ENCODE measurements at regions of chr12 and their contacts with region 1.

Region 1: DNA sequence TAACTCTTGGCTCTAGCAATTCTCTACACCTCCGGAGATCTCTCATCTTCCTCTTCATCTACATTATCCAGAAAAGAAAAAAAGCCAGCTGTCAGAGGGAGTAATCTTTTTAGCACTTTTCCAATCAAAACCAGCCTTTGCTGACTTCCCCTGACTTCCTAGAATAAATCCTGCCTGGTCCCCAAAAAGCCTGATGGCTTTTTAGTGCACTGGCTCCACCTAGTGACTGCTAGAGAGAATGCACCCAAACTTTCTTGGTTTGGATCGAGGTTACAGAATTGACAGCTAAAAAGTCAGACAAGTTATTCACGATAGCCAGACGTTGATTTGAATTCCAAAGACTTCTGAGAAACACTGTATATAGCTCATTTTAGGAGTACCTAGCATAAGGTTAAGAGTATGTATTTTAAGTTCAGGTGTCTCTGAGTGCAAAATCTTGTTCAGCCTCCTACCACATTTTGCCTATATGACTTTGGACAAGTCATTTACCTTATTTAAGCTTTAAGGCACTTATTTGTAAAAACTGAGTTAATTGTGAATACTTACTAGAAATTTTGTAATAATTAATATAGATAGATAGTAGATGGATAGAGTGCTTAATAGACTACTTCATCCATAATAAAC is 185.7 kb upstream of the GRIN2B start:
- DNase-seq: peak; percentile 7 to 35 (median 24)
- H3K4me3 ChIP-seq: no peak overlapping the region
- H3K4me3 Mint-ChIP-seq: no peak overlapping the region
- H3K27ac ChIP-seq: no peak overlapping the region
- H3K27ac Mint-ChIP-seq: no peak overlapping the region
- H3K4me1 ChIP-seq: no peaks in the 10 kb centered on the region
- H3K4me1 Mint-ChIP-seq: peaks cover 3% of the 10 kb centered on the region
- H3K27me3 ChIP-seq: peaks cover 2 to 3% of the 10 kb centered on the region in 2 donors
- H3K27me3 Mint-ChIP-seq: peaks cover 5 to 8% (median 6%) of the 10 kb centered on the region in 3 donors
- CTCF ChIP-seq: peak; percentile 96

Region 2: GRCh38 chr12:13289653-13290289 is 877.3 kb before region 1 on chr12:
- intact Hi-C with region 1: loop called in 1 of 2 experiments (anchors 10 kb)
- DNase-seq: no peak
- H3K4me3 ChIP-seq: no peak overlapping the region
- H3K4me3 Mint-ChIP-seq: no peak overlapping the region
- H3K27ac ChIP-seq: no peak overlapping the region
- H3K27ac Mint-ChIP-seq: peak overlapping the region in 1 of 7 donors; percentile 4
- H3K4me1 ChIP-seq: no peaks in the 10 kb centered on the region
- H3K4me1 Mint-ChIP-seq: no peaks in the 10 kb centered on the region
- H3K27me3 ChIP-seq: no peaks in the 10 kb centered on the region
- H3K27me3 Mint-ChIP-seq: peaks cover 0 to 3% (median 2%) of the 10 kb centered on the region in 3 donors
- CTCF ChIP-seq: no peak

Region 3: GRCh38 chr12:13864081-13864673 is 302.9 kb before region 1 on chr12:
- intact Hi-C with region 1: loop called in 1 of 2 experiments (anchors 10 kb)
- DNase-seq: peak in 2 of 3 donors; percentile 5 to 26
- H3K4me3 ChIP-seq: no peak overlapping the region
- H3K4me3 Mint-ChIP-seq: no peak overlapping the region
- H3K27ac ChIP-seq: no peak overlapping the region
- H3K27ac Mint-ChIP-seq: no peak overlapping the region
- H3K4me1 ChIP-seq: no peaks in the 10 kb centered on the region
- H3K4me1 Mint-ChIP-seq: no peaks in the 10 kb centered on the region
- H3K27me3 ChIP-seq: peaks cover 2 to 5% of the 10 kb centered on the region in 2 donors
- H3K27me3 Mint-ChIP-seq: peaks cover 0 to 9% (median 4%) of the 10 kb centered on the region in 3 donors
- CTCF ChIP-seq: peak; percentile 90

Region 4: DNA sequence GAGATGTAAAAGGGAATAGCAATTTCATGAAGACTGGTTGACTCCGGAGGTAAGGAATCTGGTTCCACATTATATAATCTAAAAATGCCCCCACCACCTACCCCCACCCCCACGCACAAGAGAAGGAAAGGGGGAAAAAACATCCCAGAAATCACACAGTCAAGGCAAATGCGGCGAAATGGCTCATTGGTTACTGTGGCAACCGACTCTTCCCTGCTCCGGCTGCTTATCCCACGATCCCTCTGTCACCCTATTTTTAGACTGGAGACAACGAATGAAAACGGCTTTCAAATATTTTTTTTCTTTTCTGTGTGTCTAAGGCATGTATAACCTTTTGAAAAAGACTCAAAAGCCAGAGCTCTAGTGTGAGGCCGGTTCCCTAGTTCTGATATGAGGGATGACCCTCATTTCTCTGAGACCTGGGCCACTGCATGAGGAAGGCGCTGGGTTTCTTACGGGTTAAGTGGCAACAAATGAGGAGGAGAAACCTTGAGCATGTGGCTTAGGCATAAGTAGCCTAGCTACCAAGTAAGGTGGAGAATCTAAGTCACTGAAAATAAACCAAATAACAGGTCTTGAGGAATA is 37.4 kb before region 1 on chr12:
- intact Hi-C with region 1: no loop called
- DNase-seq: no peak
- H3K4me3 ChIP-seq: no peak overlapping the region
- H3K4me3 Mint-ChIP-seq: no peak overlapping the region
- H3K27ac ChIP-seq: no peak overlapping the region
- H3K27ac Mint-ChIP-seq: no peak overlapping the region
- H3K4me1 ChIP-seq: no peaks in the 10 kb centered on the region
- H3K4me1 Mint-ChIP-seq: no peaks in the 10 kb centered on the region
- H3K27me3 ChIP-seq: no peaks in the 10 kb centered on the region
- H3K27me3 Mint-ChIP-seq: peaks cover 0 to 5% (median 4%) of the 10 kb centered on the region in 3 donors
- CTCF ChIP-seq: no peak

Region 5: GRCh38 chr12:14216405-14217294 is 49.5 kb after region 1 on chr12:
- intact Hi-C with region 1: no loop called
- DNase-seq: no peak
- H3K4me3 ChIP-seq: peak overlapping the region in 1 of 3 experiments; percentile 37
- H3K4me3 Mint-ChIP-seq: peak overlapping the region; percentile 51 to 58
- H3K27ac ChIP-seq: peak overlapping the region in 1 of 2 donors; percentile 50
- H3K27ac Mint-ChIP-seq: peak overlapping the region in 1 of 7 donors; percentile 15
- H3K4me1 ChIP-seq: peaks cover 4 to 7% of the 10 kb centered on the region in 2 donors
- H3K4me1 Mint-ChIP-seq: peaks cover 7% of the 10 kb centered on the region
- H3K27me3 ChIP-seq: no peaks in the 10 kb centered on the region
- H3K27me3 Mint-ChIP-seq: peaks cover 0 to 7% (median 0%) of the 10 kb centered on the region in 3 donors
- CTCF ChIP-seq: no peak